B cell (primary cell): ENCODE measurements at regions of chr19 and their contacts with region 1.

Region 1: GRCh38 chr19:2750808-2751443 is 11.1 kb upstream of the SLC39A3 start:
- DNase-seq: no peak
- ATAC-seq: no peak
- H3K4me3 ChIP-seq: no peak overlapping the region
- H3K4me3 Mint-ChIP-seq: no peak overlapping the region
- H3K27ac ChIP-seq: no peak overlapping the region
- H3K27ac Mint-ChIP-seq: no peak overlapping the region
- H3K4me1 ChIP-seq: peaks cover 8 to 18% of the 10 kb centered on the region in 2 donors
- H3K4me1 Mint-ChIP-seq: peaks cover 10% of the 10 kb centered on the region
- H3K27me3 ChIP-seq: no peaks in the 10 kb centered on the region
- H3K27me3 Mint-ChIP-seq: no peaks in the 10 kb centered on the region
- CTCF ChIP-seq: no peak

Region 2: DNA sequence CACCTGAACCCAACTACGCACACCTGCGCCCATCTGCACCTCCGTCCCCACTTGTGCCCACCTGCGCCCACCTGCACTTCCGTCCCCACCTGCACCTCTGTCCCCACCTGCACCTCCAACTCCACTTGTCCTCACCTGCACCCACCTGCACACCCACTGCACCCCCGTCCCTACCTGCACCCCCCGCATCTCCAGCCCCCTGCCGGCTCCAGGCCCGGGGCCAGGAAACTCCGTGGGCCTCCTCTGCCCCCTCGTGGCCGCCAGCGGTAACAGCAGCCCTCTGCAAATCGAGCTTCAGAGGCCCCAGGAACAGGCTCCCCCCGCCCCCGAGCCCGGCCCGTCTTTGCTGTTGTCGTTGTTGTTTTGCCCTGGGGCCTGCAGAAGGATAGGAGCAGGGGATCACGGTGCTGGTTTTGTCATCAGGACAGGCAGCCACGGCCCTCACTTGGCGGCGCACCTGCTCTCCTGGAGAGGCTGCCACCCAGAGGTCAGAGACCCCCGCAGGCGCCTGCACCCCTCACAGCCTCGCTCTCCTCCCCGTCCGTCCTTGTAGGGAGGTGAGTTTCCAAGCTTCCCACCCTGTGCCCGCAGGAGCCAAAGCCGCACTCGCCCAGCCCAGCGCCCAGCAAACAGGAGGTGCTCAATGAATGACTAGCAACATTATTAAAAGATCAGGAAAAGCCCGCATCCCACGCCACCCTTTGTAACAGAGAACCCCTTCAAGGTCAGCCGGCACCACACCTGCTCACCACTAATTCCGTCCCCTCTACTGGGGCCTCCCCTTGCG is 113.8 kb before region 1 on chr19:
- CTCF ChIA-PET with region 1: interaction called, 14 read pairs
- POLR2A ChIA-PET with region 1: no interaction called
- intact Hi-C with region 1: no loop called
- DNase-seq: peak; percentile 85
- ATAC-seq: peak; percentile 74
- H3K4me3 ChIP-seq: no peak overlapping the region
- H3K4me3 Mint-ChIP-seq: peak overlapping the region; percentile 47
- H3K27ac ChIP-seq: no peak overlapping the region
- H3K27ac Mint-ChIP-seq: peak overlapping the region; percentile 74
- H3K4me1 ChIP-seq: peaks cover 52 to 74% of the 10 kb centered on the region in 2 donors
- H3K4me1 Mint-ChIP-seq: peaks cover 81% of the 10 kb centered on the region
- H3K27me3 ChIP-seq: no peaks in the 10 kb centered on the region
- H3K27me3 Mint-ChIP-seq: no peaks in the 10 kb centered on the region
- CTCF ChIP-seq: peak; percentile 71

Region 3: DNA sequence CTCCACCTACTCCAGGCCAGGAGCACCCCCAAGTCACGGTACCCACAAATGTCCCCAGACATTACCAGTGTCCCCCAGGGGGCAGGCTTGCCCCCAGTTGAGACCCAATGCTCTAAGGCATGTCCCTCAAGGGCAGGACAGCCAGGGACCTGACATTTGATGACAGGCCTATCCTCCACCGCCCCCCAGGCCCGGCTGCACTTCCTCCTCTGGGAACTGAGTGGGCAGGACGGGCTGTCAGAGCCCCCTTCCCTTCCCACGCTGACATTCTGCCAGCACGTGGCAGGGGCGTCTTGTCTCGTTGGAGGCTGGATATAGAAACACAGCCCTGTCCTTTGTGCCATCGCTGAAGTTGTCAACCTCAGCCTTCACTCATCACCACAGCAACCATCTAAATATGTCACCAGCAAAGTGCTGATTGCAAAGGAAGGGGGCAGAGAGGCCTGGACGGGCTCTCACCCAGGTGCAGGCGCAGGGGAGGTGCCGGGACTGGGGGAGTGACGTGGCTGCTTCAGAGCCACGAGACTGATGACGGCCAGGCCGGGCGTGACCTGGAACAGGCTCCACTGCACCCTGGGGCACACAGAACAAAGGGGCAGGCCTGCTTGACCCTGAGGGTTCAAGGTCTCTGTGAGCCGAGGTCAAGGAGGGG is 86.9 kb before region 1 on chr19:
- CTCF ChIA-PET with region 1: interaction called, 19 read pairs
- POLR2A ChIA-PET with region 1: interaction called, 15 read pairs
- intact Hi-C with region 1: loop called (anchors 1 kb)
- DNase-seq: peak; percentile 95
- ATAC-seq: peak; percentile 86
- H3K4me3 ChIP-seq: no peak overlapping the region
- H3K4me3 Mint-ChIP-seq: peak overlapping the region; percentile 78
- H3K27ac ChIP-seq: peak overlapping the region; percentile 92
- H3K27ac Mint-ChIP-seq: peak overlapping the region; percentile 98
- H3K4me1 ChIP-seq: peaks cover 35 to 43% of the 10 kb centered on the region in 2 donors
- H3K4me1 Mint-ChIP-seq: peaks cover 59% of the 10 kb centered on the region
- H3K27me3 ChIP-seq: no peaks in the 10 kb centered on the region
- H3K27me3 Mint-ChIP-seq: no peaks in the 10 kb centered on the region
- CTCF ChIP-seq: peak; percentile 75

Region 4: GRCh38 chr19:2726904-2727639 is 23.9 kb before region 1 on chr19:
- CTCF ChIA-PET with region 1: interaction called, 14 read pairs
- POLR2A ChIA-PET with region 1: no interaction called
- intact Hi-C with region 1: no loop called
- DNase-seq: peak; percentile 41
- ATAC-seq: no peak
- H3K4me3 ChIP-seq: peak overlapping the region in 2 of 5 experiments; percentile 6 to 9
- H3K4me3 Mint-ChIP-seq: peak overlapping the region; percentile 70
- H3K27ac ChIP-seq: peak overlapping the region in 1 of 2 donors; percentile 6
- H3K27ac Mint-ChIP-seq: no peak overlapping the region
- H3K4me1 ChIP-seq: peaks cover 20 to 26% of the 10 kb centered on the region in 2 donors
- H3K4me1 Mint-ChIP-seq: peaks cover 22% of the 10 kb centered on the region
- H3K27me3 ChIP-seq: peaks cover 0 to 7% (median 2%) of the 10 kb centered on the region in 4 experiments
- H3K27me3 Mint-ChIP-seq: peaks cover 4% of the 10 kb centered on the region
- CTCF ChIP-seq: no peak

Region 5: GRCh38 chr19:2782936-2783780 is 32.2 kb after region 1 on chr19 and contains the start of gene SGTA:
- CTCF ChIA-PET with region 1: interaction called, 9 read pairs
- POLR2A ChIA-PET with region 1: interaction called, 3 read pairs
- intact Hi-C with region 1: loop called (anchors 1 kb)
- DNase-seq: peak; percentile 98
- ATAC-seq: peak; percentile 67
- H3K4me3 ChIP-seq: peak within 1 kb of the TSS; percentile 62 to 99 (median 93)
- H3K4me3 Mint-ChIP-seq: peak within 1 kb of the TSS; percentile 91
- H3K27ac ChIP-seq: peak within 1 kb of the TSS; percentile 83 to 95
- H3K27ac Mint-ChIP-seq: peak within 1 kb of the TSS; percentile 97
- H3K4me1 ChIP-seq: peaks cover 23 to 39% of the 10 kb centered on the region in 2 donors
- H3K4me1 Mint-ChIP-seq: peaks cover 60% of the 10 kb centered on the region
- H3K27me3 ChIP-seq: no peaks in the 10 kb centered on the region
- H3K27me3 Mint-ChIP-seq: no peaks in the 10 kb centered on the region
- CTCF ChIP-seq: peak; percentile 59
- total RNA-seq, gene SGTA: 36.6 and 39.8 TPM in 2 replicates